Activated CD4-positive, alpha-beta T cell treated with anti-CD3 and anti-CD28 coated beads, Interleukin-2, amount 10 ng/mL, durations not matched to agents 7 days and 5 days (primary cell): ENCODE measurements at regions of chr19 and their contacts with region 1.

Region 1: DNA sequence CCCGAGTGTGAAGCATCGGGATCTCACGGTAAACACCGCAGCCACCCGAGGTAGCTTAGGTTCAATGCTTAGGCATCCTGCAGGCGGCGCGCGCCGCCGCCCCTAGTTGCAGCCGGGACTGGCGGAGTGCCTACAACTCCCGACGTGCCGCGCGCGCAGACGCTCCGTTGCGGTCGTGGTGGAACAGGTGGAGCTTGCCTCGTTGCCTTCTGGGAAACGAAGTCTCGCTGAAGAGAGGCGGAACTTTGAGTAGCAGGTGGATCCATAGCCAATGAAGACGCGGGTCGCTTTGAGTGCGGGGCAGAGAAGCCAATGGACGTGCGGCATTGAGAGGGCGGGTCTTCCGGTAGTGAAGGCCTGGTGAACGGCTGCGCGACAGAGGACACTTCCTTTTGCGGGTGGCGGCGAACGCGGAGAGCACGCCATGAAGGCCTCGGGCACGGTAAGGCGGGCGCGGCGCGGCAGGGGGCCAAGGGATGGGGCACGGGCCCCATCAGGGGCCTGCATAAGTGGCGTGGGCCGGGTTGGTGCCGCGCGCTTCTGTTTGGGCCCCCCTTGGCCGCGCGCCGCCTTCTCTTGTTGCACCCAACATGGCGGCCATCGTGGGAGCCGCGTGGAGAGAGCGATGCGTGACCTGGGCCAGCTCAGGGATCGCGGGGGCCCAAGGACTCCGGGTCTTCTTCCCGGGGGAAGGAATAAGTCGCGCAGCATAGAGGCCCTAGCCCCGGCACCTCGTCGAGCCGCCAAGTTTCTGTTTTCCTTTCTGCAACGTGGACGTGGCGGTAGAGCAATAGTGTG is at the start of gene RPL18A:
- DNase-seq: peak; percentile 100
- H3K4me3 Mint-ChIP-seq: peak within 1 kb of the TSS; percentile 90
- H3K27ac Mint-ChIP-seq: peak within 1 kb of the TSS; percentile 94
- H3K4me1 Mint-ChIP-seq: peaks cover 26% of the 10 kb centered on the region
- H3K27me3 Mint-ChIP-seq: no peaks in the 10 kb centered on the region
- total RNA-seq, gene RPL18A: 2,216 to 2,434 TPM

Region 2: GRCh38 chr19:17648097-17648660 is 211.6 kb before region 1 on chr19:
- CTCF ChIA-PET with region 1: no interaction called
- POLR2A ChIA-PET with region 1: no interaction called
- DNase-seq: no peak
- H3K4me3 Mint-ChIP-seq: no peak overlapping the region
- H3K27ac Mint-ChIP-seq: no peak overlapping the region
- H3K4me1 Mint-ChIP-seq: no peaks in the 10 kb centered on the region
- H3K27me3 Mint-ChIP-seq: no peaks in the 10 kb centered on the region

Region 3: DNA sequence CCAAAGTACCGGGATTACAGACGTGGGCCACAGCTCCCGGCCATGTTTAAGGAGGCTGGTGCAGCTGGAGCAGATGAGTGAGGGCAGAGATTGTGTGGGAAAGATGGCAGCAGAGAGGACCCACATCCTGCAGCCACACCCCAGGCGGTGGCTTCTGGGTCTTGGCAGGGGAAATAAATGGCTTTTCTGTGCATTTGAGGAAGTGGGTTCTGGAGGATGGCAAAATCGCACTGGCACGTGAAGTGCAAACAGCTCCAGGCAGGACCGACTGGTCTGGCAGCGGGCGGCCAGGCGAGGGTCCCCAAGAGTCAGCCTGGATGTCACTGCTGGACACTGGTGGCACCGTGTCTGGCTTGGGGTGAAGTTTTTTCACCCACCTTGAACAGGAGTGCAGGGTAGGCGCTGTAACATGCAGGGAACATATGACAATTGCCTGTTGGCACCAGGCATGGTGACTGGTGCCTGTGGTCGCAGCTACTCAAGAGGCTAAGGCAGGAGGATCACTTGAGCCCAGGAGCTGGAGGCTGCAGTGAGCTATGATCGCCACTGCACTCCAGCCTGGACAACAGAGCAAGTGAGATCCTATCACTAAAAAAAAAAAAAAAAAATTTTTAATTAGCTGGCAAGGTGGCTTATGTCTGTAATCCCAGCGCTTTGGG is 56.3 kb before region 1 on chr19:
- CTCF ChIA-PET with region 1: interaction called, 14 read pairs
- POLR2A ChIA-PET with region 1: no interaction called
- DNase-seq: peak; percentile 71
- H3K4me3 Mint-ChIP-seq: peak overlapping the region; percentile 55
- H3K27ac Mint-ChIP-seq: peak overlapping the region; percentile 97
- H3K4me1 Mint-ChIP-seq: peaks cover 52% of the 10 kb centered on the region
- H3K27me3 Mint-ChIP-seq: peaks cover 2% of the 10 kb centered on the region

Region 4: DNA sequence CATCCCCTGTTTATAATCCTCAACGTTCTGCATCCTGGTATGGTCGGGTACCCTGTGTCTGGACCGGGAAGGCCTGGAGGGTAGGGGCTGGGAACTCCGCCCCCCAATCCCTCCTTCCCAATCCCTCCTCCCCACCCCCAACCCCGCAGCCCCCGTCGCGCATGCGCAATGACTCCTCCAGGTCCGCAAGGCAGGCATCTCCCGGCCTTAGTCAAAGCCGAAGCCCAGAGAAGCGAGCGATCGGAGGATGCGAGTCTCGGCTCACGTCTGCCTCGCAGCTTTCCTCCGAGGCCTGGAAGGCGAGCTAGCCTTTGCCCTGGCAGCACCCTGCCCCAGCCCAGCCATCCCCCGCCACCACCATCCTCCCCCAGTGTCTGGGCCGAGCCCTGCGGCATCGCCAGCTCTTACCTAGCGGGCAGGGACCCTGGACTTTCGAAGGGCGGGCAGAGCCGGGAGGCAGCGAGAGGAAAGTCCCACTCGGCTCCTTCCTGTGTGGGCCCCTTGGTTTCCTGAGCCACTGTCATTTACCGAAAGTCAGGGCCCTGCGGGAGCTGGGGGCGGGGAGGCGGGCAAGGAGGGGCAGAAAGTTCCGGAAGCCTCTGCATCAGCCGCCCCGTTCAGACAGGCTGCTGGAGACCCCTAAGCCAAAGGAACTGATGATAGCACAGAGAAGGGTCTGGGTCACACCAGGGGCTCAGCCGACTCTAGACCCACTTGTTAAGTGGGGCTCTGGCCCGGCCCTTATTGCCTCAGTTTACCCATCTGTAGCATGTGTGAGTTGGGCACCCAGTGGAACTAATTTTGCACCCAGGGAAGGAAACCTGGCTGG is 12.0 kb before region 1 on chr19 and contains the start of gene JAK3:
- CTCF ChIA-PET with region 1: interaction called, 39 read pairs
- POLR2A ChIA-PET with region 1: interaction called, 3 read pairs
- DNase-seq: peak; percentile 89
- H3K4me3 Mint-ChIP-seq: peak within 1 kb of the TSS; percentile 92
- H3K27ac Mint-ChIP-seq: peak within 1 kb of the TSS; percentile 97
- H3K4me1 Mint-ChIP-seq: peaks cover 69% of the 10 kb centered on the region
- H3K27me3 Mint-ChIP-seq: no peaks in the 10 kb centered on the region
- total RNA-seq, gene JAK3: 172 to 176 TPM

Region 5: DNA sequence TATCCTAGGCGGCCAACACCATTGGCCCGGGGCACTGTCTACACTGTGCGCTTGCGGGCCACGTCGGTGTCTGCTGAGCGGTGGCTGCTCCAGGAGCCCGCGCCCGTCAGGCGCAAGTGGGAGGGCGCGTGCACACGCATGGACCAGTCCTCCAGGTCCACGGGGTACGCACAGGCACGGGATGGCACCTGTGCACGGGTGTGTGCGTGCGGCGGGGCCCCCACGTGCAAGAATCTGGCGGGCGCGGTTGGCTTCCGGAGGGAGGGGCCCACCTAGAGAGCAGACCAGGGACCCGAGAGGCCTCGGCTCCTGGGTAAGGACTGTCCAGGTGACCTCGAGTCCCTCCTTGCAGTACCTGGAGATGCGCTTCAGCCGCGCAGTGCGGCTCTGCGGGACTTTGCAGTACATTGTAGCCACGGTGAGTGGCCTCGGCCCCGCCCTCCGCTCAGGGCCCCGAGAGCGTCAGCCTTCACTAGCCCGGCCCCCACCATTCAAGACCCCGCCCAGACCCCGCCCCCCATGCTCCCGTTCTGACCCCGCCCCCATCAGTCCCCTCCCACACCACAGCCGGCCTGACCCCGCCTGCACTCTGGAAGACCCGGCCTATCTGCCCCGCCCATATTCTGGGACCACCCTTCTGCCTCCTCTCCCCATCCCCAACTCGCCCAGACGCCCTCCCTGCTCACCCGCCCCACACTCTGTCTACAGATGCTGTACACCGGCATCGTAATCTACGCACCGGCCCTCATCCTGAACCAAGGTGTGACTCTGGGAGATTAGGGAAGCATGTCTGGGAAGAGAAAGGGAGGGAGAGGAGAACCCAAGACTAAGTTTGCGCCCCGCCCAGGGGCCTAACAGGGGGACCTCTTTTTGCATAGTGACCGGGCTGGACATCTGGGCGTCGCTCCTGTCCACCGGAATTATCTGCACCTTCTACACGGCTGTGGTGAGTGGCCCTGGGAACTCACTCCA is 14.3 kb after region 1 on chr19:
- CTCF ChIA-PET with region 1: interaction called, 34 read pairs
- POLR2A ChIA-PET with region 1: no interaction called
- DNase-seq: peak; percentile 70
- H3K4me3 Mint-ChIP-seq: peak overlapping the region; percentile 83
- H3K27ac Mint-ChIP-seq: peak overlapping the region; percentile 80
- H3K4me1 Mint-ChIP-seq: peaks cover 29% of the 10 kb centered on the region
- H3K27me3 Mint-ChIP-seq: peaks cover 3% of the 10 kb centered on the region